Activated CD4-positive, alpha-beta memory T cell treated with anti-CD3 and anti-CD28 coated beads for 36 hours (primary cell): ENCODE measurements at regions of chrX and their contacts with region 1.

Region 1: DNA sequence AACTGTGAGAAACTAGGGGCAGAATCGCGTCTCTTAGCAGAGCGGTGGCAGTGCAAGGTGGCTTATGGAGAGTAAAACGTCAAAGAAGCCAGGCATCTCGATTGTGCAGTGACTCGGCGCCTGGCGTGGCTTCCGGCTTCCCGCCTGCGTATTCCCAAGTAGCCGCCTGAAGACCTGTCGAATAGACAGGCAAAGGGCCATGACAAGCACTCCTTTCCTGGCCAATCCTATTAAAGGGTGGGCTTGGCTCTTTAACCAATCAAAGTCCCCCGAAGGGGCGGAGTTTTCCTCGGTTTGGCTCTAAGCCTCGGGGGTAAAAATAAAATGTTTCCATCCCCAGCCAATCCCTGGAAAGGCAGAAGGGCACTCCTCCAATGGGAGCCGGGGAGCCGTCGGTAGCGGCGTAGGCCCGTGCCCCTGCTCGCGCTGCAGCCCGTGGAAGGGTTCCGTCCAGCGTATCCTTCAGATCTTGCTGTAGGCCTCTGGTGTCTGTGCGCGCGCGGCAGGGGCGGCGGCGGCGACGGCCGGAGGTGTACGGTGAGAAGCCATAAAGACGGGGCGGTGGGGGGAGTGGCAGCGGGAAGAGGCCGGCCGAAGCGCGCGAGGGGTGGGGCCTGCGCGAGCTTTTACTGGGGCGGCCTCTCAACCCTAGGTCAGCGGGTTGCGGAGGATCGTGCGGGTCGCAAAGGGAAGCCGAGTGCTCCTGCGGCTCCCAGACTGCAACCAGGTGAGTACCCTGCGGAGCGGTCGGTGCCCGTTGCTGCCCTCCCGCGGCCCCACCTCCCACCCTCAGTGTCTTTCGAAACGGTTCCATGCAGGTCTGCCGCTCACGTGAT is at the start of gene KANTR:
- DNase-seq: peak; percentile 89
- H3K4me3 Mint-ChIP-seq: peak within 1 kb of the TSS; percentile 90
- H3K27ac Mint-ChIP-seq: peak within 1 kb of the TSS; percentile 91
- H3K4me1 Mint-ChIP-seq: peaks cover 16% of the 10 kb centered on the region
- H3K27me3 Mint-ChIP-seq: no peaks in the 10 kb centered on the region
- total RNA-seq, gene KANTR: 5.9 to 6.4 TPM

Region 2: GRCh38 chrX:52995135-52996020 is 98.6 kb before region 1 on chrX:
- CTCF ChIA-PET with region 1: no interaction called
- POLR2A ChIA-PET with region 1: no interaction called
- intact Hi-C with region 1: loop called (anchors 5 kb)
- DNase-seq: peak; percentile 95
- H3K4me3 Mint-ChIP-seq: peak overlapping the region; percentile 94
- H3K27ac Mint-ChIP-seq: peak overlapping the region; percentile 98
- H3K4me1 Mint-ChIP-seq: peaks cover 18% of the 10 kb centered on the region
- H3K27me3 Mint-ChIP-seq: no peaks in the 10 kb centered on the region

Region 3: GRCh38 chrX:53071604-53072417 is 22.2 kb before region 1 on chrX:
- CTCF ChIA-PET with region 1: interaction called, 12 read pairs
- POLR2A ChIA-PET with region 1: no interaction called
- intact Hi-C with region 1: loop called (anchors 1 kb)
- DNase-seq: peak; percentile 73
- H3K4me3 Mint-ChIP-seq: peak overlapping the region; percentile 82
- H3K27ac Mint-ChIP-seq: peak overlapping the region; percentile 69
- H3K4me1 Mint-ChIP-seq: peaks cover 13% of the 10 kb centered on the region
- H3K27me3 Mint-ChIP-seq: peaks cover 1% of the 10 kb centered on the region

Region 4: GRCh38 chrX:53188763-53189162 is 94.8 kb after region 1 on chrX:
- CTCF ChIA-PET with region 1: no interaction called
- POLR2A ChIA-PET with region 1: no interaction called
- intact Hi-C with region 1: loop called (anchors 10 kb)
- DNase-seq: peak; percentile 69
- H3K4me3 Mint-ChIP-seq: no peak overlapping the region
- H3K27ac Mint-ChIP-seq: peak overlapping the region; percentile 54
- H3K4me1 Mint-ChIP-seq: peaks cover 24% of the 10 kb centered on the region
- H3K27me3 Mint-ChIP-seq: no peaks in the 10 kb centered on the region

Region 5: DNA sequence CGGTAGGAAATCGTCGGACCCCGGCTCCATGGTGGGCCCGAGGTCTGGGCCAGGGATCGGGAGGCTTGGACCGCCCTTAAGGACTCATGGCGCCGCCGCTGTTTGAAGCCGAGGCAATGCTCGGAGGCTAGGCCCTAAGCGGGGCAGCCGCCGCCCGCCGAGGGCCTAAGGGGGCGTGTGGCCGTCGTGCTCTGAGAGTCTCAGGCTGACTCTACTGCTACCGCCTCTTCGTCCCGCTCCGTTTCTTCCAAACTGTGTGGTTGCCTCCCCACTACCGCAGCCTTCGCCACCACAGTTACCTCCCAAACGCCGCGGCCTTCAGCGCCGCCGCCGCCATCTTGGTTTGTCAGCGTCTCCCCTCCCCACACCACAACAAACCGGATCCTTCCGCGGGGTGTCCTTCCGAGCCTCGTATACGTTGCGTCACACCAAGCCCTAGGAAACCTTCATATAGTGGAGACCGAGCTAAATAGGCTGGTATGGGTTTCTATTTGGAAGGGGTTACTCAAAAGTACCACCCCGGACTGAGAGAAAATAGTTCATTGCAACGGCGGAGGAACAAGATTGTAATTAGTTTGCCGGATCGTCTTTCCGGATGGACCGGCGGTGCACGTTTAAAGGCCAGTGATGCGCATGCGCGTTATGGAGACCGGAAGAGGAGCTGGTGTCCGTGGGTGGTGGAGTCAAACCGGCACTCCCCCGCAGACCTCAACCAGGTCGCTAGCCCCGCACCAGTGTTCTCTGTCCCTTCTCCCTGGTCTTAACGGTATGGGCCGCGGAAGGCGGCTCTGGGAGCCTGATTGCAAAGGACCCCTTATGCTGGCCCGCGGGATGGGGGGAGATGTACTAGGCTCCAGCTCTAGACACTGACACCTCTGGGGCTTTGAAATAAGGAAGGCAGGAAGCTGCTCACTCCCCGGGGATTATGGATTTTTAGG is 131.2 kb after region 1 on chrX and contains the start of gene KDM5C:
- CTCF ChIA-PET with region 1: interaction called, 3 read pairs
- POLR2A ChIA-PET with region 1: interaction called, 3 read pairs
- intact Hi-C with region 1: loop called (anchors 1 kb)
- DNase-seq: peak; percentile 91
- H3K4me3 Mint-ChIP-seq: peak within 1 kb of the TSS; percentile 93
- H3K27ac Mint-ChIP-seq: peak within 1 kb of the TSS; percentile 97
- H3K4me1 Mint-ChIP-seq: peaks cover 28% of the 10 kb centered on the region
- H3K27me3 Mint-ChIP-seq: no peaks in the 10 kb centered on the region
- total RNA-seq, gene KDM5C: 77.6 to 86.0 TPM

Region 6: GRCh38 chrX:53330331-53330730 is 236.4 kb after region 1 on chrX:
- CTCF ChIA-PET with region 1: no interaction called
- POLR2A ChIA-PET with region 1: no interaction called
- intact Hi-C with region 1: no loop called
- DNase-seq: no peak
- H3K4me3 Mint-ChIP-seq: no peak overlapping the region
- H3K27ac Mint-ChIP-seq: no peak overlapping the region
- H3K4me1 Mint-ChIP-seq: no peaks in the 10 kb centered on the region
- H3K27me3 Mint-ChIP-seq: peaks cover 12% of the 10 kb centered on the region